Gastrocnemius medialis (tissue), 4 donors: ENCODE measurements at regions of chr6 and their contacts with region 1.

Region 1: GRCh38 chr6:163814494-163815364 is 400.2 kb downstream of the QKI start:
- DNase-seq: peak; percentile 22 to 48
- ATAC-seq: peak; percentile 97 to 99
- H3K4me3 ChIP-seq: no peak overlapping the region
- H3K27ac ChIP-seq: peak overlapping the region; percentile 76 to 87 (median 84)
- H3K4me1 ChIP-seq: peaks cover 19 to 20% of the 10 kb centered on the region in 2 donors
- H3K27me3 ChIP-seq: no peaks in the 10 kb centered on the region
- CTCF ChIP-seq: peak; percentile 40 to 55 (median 48)
- POLR2A ChIP-seq: no peak

Region 2: DNA sequence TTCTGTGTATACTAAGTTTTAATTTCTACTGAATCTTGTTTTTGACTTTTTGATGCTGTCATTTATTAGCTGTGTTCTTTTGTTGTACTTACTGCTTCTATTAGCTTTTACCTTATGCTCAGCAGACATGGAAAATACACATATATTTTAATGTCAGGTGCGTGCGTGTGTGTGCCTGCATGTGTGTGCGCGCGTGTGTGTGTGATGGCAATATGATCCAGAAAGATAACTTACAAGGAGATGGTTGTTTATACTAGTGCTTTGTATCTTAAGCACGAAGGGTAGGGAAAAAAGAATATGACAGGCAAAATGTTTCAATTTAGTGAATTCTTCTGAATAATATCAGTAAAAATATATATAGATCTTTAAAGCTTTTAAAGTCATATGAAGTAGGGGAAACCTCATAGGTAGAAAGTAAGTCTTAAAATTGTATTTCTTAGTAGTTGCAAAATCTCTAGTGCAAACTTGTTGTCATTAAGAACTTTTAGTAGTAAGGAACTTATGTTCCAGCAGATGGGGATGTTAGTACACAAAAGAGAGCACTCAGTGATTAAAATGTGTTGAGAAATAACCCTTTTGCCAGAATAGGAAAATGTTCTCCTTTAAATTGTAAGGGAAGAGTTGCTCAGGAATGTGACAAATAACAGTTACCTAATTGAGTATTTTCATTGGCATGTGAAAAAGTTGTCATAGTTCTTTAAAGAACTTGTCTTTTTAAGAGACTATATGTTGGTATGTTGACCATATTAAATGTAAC is 387.1 kb before region 1 on chr6:
- in situ Hi-C with region 1: no loop called
- intact Hi-C with region 1: loop called (anchors 10 kb)
- DNase-seq: no peak
- ATAC-seq: peak; percentile 62 to 68
- H3K4me3 ChIP-seq: peak overlapping the region in 3 of 4 donors; percentile 13 to 26 (median 17)
- H3K27ac ChIP-seq: peak overlapping the region; percentile 98 to 99 (median 99)
- H3K4me1 ChIP-seq: peaks cover 96 to 100% of the 10 kb centered on the region in 2 donors
- H3K27me3 ChIP-seq: no peaks in the 10 kb centered on the region
- CTCF ChIP-seq: peak in 4 of 5 experiments; percentile 33 to 83 (median 44)
- POLR2A ChIP-seq: no peak

Region 3: GRCh38 chr6:163945808-163946207 is 131.1 kb after region 1 on chr6:
- in situ Hi-C with region 1: no loop called
- intact Hi-C with region 1: no loop called
- DNase-seq: no peak
- ATAC-seq: no peak
- H3K4me3 ChIP-seq: no peak overlapping the region
- H3K27ac ChIP-seq: peak overlapping the region; percentile 24 to 61 (median 52)
- H3K4me1 ChIP-seq: peaks cover 37 to 45% of the 10 kb centered on the region in 2 donors
- H3K27me3 ChIP-seq: no peaks in the 10 kb centered on the region
- CTCF ChIP-seq: no peak
- POLR2A ChIP-seq: no peak

Region 4: DNA sequence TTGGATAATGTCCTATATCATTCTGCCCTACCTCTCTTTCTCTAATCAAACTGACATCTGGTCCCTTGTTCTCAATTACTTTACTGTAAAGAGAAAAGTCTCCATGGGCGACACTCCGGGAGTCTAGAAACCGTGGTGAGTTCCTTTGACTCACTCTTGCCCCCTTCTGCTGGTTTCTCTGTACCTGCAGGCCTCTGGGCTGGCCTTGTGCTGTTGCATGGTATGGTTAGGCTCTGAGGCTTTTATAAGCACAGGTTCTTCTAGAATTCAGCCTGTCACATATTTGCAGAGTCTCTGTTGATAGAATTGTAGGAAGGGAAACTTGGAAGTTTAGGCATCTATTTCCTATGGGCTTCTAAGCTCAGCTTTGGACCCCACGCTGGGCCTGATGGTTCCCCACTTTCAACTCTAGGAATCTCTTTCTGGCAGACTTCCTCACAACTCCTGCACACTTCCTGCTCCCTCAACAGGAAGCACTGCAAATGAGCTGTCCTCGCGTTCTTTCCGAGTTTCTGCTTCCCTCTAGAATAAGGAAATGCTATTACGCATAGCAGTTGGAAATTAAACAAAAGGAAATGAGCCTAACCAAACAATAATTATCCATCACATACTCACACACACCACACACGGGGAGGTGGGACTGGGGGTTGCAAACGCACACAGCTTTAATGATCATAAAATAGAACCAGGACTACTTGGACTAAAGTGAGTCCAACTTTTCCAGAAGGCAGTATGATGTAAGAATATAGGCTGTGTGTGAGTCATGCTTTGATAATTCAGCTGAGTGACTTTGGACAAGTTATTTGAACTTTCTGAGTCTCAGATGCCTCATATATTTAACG is 283.0 kb after region 1 on chr6:
- in situ Hi-C with region 1: no loop called
- intact Hi-C with region 1: loop called (anchors 2 kb)
- DNase-seq: peak in 1 of 2 donors; percentile 68
- ATAC-seq: peak; percentile 41 to 62
- H3K4me3 ChIP-seq: no peak overlapping the region
- H3K27ac ChIP-seq: peak overlapping the region; percentile 84 to 96 (median 89)
- H3K4me1 ChIP-seq: peaks cover 33 to 37% of the 10 kb centered on the region in 2 donors
- H3K27me3 ChIP-seq: no peaks in the 10 kb centered on the region
- CTCF ChIP-seq: peak in 3 of 5 experiments; percentile 32 to 47 (median 38)
- POLR2A ChIP-seq: no peak